Ascending aorta (tissue), 2 donors: ENCODE measurements at regions of chr14 and their contacts with region 1.

Region 1: GRCh38 chr14:44897045-44897844 is 64.5 kb downstream of the KLHL28 start:
- DNase-seq: peak; percentile 97 to 99
- H3K4me3 ChIP-seq: peak overlapping the region; percentile 77 to 82
- H3K27ac ChIP-seq: peak overlapping the region; percentile 99 to 100
- H3K4me1 ChIP-seq: peaks cover 0 to 15% of the 10 kb centered on the region in 2 donors
- H3K27me3 ChIP-seq: no peaks in the 10 kb centered on the region
- CTCF ChIP-seq: no peak

Region 2: GRCh38 chr14:44912041-44912869 is 15.0 kb after region 1 on chr14:
- intact Hi-C with region 1: loop called (anchors 1 kb)
- DNase-seq: no peak
- H3K4me3 ChIP-seq: peak overlapping the region; percentile 56 to 77
- H3K27ac ChIP-seq: no peak overlapping the region
- H3K4me1 ChIP-seq: peaks cover 0 to 6% of the 10 kb centered on the region in 2 donors
- H3K27me3 ChIP-seq: no peaks in the 10 kb centered on the region
- CTCF ChIP-seq: no peak

Region 3: DNA sequence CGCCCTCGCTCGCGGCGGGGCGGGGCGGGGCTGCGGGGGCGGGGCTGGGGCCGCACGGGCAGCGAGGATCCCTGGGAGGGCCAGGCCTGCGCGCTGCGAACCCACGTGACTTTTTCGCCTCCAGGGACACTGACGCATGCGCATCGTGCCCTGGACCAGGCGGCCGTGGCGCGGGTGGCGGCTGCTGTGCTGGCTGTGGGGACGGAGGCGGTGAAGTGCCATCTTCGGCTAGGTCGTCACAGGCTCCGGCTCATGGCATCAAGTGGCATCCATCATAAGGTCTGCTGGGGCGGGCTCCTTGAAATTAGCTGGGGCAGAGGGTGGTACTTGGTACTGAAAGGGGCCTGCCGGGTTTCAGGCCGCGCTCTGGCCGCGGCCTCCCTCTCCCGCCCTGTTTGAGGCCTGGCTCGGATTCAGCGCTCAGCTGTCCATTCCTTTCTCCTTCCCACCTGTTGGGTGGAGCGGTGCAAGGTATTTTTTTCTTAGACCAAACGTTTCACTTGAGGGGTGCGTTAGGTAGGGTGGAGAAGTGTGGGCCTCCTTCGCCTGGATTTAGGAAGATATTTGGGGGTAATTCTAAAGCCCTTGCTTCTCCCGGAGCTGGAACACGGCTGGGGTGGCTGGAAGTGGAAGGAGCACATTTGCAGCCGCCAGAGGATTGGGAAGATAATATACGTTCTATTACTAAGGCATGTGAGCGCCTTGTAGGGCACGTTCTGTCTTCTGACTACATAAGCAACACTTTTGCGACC is 186.9 kb after region 1 on chr14 and contains the start of gene PRPF39:
- intact Hi-C with region 1: loop called (anchors 5 kb)
- DNase-seq: peak; percentile 72 to 96
- H3K4me3 ChIP-seq: peak within 1 kb of the TSS; percentile 83 to 94
- H3K27ac ChIP-seq: peak within 1 kb of the TSS; percentile 71 to 80
- H3K4me1 ChIP-seq: peaks cover 0 to 14% of the 10 kb centered on the region in 2 donors
- H3K27me3 ChIP-seq: no peaks in the 10 kb centered on the region
- CTCF ChIP-seq: no peak
- total RNA-seq, gene PRPF39: 43.2 TPM

Region 4: DNA sequence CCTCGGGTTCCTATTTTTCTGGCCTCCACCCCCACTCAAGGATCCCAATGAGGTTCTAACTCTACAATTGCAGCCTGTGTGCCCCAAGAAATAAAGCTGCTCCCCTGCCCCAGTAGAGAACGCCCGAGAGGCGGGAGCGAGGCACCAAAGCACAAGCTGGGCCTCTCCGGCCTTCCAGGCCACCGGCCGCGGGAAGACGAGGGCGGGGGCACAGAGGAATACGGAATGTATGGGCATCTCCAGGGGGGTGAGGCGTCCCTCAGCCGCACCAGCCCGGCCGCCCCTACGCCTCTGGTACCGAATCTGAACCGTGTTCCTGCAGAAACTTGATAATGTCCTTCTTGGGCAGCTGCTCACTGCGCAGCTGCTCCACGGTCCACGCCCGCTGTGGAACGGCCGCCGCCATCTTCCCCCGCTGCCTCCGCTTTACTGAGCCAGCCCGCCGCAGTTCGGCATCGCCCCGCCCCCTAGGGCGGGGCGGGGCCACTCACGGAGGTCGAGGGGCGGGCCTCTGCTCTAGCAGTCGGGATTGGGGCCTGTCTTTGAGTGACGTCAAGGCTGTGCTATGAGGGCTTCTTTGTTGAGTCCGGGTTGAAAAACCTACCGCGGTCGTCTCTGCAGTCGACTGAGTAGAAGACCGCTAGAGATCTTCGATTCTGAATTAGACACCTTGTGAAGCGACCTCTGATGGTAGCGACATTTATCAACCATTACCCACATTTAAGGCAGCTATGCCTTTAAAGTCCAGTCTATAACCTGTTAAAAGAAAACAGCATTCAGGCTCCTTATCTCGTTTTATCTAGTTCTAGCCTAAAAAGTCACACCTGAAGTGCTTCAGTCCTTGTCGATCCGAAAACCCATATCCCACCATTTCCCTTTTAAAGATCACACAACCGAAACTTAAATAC is 237.1 kb after region 1 on chr14 and contains the start of gene FKBP3:
- intact Hi-C with region 1: loop called (anchors 1 kb)
- DNase-seq: peak; percentile 91 to 98
- H3K4me3 ChIP-seq: peak within 1 kb of the TSS; percentile 72 to 77
- H3K27ac ChIP-seq: peak within 1 kb of the TSS; percentile 78 to 91
- H3K4me1 ChIP-seq: peaks cover 2 to 23% of the 10 kb centered on the region in 2 donors
- H3K27me3 ChIP-seq: no peaks in the 10 kb centered on the region
- CTCF ChIP-seq: no peak
- total RNA-seq, gene FKBP3: 8.8 TPM

Region 5: GRCh38 chr14:45253068-45253753 is 356.0 kb after region 1 on chr14 and contains the start of gene MIS18BP1:
- intact Hi-C with region 1: loop called (anchors 5 kb)
- DNase-seq: peak; percentile 81 to 97
- H3K4me3 ChIP-seq: peak within 1 kb of the TSS; percentile 66 to 76
- H3K27ac ChIP-seq: peak within 1 kb of the TSS; percentile 85 to 87
- H3K4me1 ChIP-seq: peaks cover 0 to 9% of the 10 kb centered on the region in 2 donors
- H3K27me3 ChIP-seq: no peaks in the 10 kb centered on the region
- CTCF ChIP-seq: peak; percentile 62 to 74 (median 71)
- total RNA-seq, gene MIS18BP1: 35.9 TPM